ENCODE measurements at regions of chr1 and their contacts with region 1.

Region 1: DNA sequence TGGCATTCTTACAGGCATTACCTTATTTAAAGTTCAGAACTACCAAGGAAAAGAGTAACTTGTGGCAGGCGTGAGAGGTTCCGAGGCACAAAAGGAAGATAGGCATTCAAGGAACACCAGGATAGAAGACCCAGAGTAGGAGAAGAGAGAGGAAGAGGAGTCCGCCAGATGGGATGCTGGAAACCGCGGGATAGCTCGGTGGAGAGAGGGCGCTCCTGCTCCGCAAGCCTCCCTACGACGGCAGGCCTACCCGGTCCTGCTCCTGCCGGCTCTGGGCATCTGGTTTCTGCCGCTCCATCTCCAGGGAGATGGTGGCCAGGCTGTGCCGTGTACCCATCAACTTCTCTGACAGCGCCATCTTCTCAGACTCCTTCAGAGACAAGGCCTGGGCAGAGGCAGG is 5.4 kb upstream of the NBPF1 start:
- DNase-seq: peak in 3 of 4 experiments; percentile 47 to 67 (median 62)
- ATAC-seq: no peak
- H3K4me3 ChIP-seq: no peak overlapping the region
- H3K27ac ChIP-seq: no peak overlapping the region
- H3K4me1 ChIP-seq: peaks cover 19 to 39% of the 10 kb centered on the region in 2 experiments
- H3K27me3 ChIP-seq: no peaks in the 10 kb centered on the region
- CTCF ChIP-seq: peak in 1 of 3 experiments; percentile 11; a peak in 1 of 6 replicates
- EP300 ChIP-seq: no peak
- POLR2A ChIP-seq: no peak
- RAD21 ChIP-seq: no peak

Region 2: GRCh38 chr1:16631248-16632043 is 12.7 kb after region 1 on chr1:
- CTCF ChIA-PET with region 1: interaction called, 7 read pairs
- POLR2A ChIA-PET with region 1: interaction called, 36 read pairs
- in situ Hi-C with region 1: no loop called
- intact Hi-C with region 1: no loop called
- DNase-seq: peak in 3 of 4 experiments; percentile 34 to 50 (median 49)
- ATAC-seq: no peak; the same call in 2 of the 3 replicates
- H3K4me3 ChIP-seq: no peak overlapping the region
- H3K27ac ChIP-seq: no peak overlapping the region
- H3K4me1 ChIP-seq: peaks cover 0 to 22% of the 10 kb centered on the region in 2 experiments; a peak in 1 of 5 replicates
- H3K27me3 ChIP-seq: no peaks in the 10 kb centered on the region
- CTCF ChIP-seq: no peak
- EP300 ChIP-seq: no peak
- POLR2A ChIP-seq: peak; percentile 41
- RAD21 ChIP-seq: no peak

Region 3: DNA sequence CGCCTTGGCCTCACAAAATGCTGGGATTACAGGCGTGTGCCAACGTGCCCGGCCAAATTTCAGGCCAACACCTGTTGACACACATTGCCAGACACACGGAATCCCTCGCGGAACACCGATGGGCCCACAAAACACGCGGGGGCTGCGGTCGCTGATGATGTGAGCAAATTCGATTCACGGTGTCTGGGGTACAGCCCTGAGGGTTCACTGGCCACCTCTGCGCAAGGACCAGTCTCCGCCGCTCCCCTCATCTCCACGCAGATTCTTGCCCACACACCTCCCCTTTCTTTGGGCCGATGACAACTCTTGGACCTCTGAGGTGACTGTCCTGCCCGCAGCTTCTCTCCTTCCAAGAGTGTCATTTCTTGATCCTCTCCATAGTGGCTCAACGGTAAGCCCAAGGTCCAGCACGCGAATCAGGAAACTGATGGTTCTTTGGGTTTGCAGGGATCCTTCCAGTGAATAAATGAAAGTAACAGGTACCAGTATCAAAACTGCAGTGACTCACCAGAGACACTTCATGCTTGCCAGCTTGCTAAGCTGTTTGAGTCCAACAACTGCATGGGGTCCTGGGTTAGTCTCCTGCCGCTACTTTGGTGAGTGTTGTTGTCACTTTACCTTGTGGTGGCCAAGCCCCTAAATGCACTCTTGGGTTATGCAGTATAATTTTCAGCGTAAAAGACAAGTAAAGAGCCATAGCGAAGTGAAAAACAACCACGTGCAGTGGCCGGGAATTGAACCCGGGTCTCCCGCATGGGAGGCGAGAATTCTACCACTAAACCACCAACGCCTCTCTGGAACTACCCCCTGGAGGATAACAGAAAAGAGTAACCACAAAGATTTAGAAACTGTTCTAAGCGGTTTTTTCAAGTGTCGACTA is 59.1 kb after region 1 on chr1:
- CTCF ChIA-PET with region 1: no interaction called
- POLR2A ChIA-PET with region 1: no interaction called
- in situ Hi-C with region 1: no loop called
- intact Hi-C with region 1: no loop called
- DNase-seq: peak; percentile 69 to 92 (median 76)
- ATAC-seq: peak; percentile 98
- H3K4me3 ChIP-seq: peak overlapping the region; percentile 25
- H3K27ac ChIP-seq: peak overlapping the region; percentile 16; the same call in 2 of the 3 replicates
- H3K4me1 ChIP-seq: peaks cover 0 to 15% of the 10 kb centered on the region in 2 experiments; a peak in 3 of 5 replicates
- H3K27me3 ChIP-seq: no peaks in the 10 kb centered on the region
- CTCF ChIP-seq: peak in 2 of 3 experiments; percentile 1 to 12; a peak in 1 of 6 replicates
- EP300 ChIP-seq: peak; percentile 85
- POLR2A ChIP-seq: no peak
- RAD21 ChIP-seq: 0 out of 4 replicates have a peak, but pooled peaks of 1 of the 2 experiments have one; percentile 18

Region 4: DNA sequence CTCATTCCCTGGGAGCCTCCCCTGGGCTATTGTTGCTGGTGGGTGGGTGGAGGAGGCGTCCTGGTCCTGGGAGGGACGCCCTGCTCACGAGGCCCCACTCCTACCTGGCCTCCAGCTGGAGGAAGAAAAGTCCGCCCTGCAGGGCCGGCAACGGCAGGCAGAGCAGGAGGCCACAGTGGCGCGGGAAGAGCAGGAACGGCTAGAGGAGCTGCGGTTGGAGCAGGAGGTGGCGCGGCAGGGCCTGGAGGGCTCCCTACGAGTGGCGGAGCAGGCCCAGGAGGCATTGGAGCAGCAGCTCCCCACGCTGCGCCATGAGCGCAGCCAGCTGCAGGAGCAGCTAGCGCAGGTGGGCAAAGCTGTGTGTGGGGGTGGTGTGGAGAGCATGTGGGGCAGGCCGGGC is 327.9 kb after region 1 on chr1:
- CTCF ChIA-PET with region 1: interaction called, 18 read pairs
- POLR2A ChIA-PET with region 1: interaction called, 17 read pairs
- in situ Hi-C with region 1: no loop called
- intact Hi-C with region 1: loop called (anchors 1 kb)
- DNase-seq: no peak
- ATAC-seq: no peak
- H3K4me3 ChIP-seq: no peak overlapping the region
- H3K27ac ChIP-seq: no peak overlapping the region
- H3K4me1 ChIP-seq: peaks cover 0 to 17% of the 10 kb centered on the region in 2 experiments; a peak in 2 of 5 replicates
- H3K27me3 ChIP-seq: no peaks in the 10 kb centered on the region
- CTCF ChIP-seq: no peak
- EP300 ChIP-seq: no peak
- POLR2A ChIP-seq: no peak
- RAD21 ChIP-seq: no peak

Region 5: DNA sequence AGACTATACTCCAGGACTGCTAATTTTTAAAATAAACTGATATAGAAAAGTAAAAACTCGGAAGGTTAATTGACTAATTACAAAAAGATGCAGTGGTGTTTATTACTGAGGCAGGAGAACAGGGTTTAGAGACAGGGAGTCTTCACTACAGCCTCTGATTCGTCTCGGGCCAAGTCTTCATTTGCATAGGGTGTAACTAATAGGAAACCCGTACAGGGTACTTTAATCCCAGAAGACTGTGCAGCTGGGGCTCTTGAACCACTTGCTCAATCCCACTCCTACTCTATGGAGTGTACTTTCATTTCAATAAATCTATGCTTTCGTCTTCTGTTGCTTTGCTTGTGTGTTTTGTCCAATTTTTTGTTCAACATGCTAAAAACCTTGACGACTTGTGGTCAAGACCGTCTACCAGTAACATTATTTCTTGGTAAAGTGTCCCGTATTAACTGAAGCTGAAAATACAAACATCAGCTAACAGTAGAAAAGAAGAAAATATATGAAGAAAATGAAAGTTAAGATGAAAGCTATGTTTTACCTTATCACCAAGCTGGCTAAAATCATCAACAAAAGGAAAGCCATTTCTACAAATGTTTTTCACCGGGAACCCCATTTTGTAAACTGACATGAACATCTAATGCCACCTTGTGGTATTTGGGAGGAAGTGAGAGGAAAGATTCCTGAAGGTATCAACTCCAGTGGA is 427.1 kb after region 1 on chr1:
- CTCF ChIA-PET with region 1: interaction called, 34 read pairs
- POLR2A ChIA-PET with region 1: interaction called, 3 read pairs
- in situ Hi-C with region 1: no loop called
- intact Hi-C with region 1: loop called (anchors 1 kb)
- DNase-seq: peak in 2 of 4 experiments; percentile 58 to 60
- ATAC-seq: peak; percentile 80
- H3K4me3 ChIP-seq: no peak overlapping the region
- H3K27ac ChIP-seq: no peak overlapping the region
- H3K4me1 ChIP-seq: no peaks in the 10 kb centered on the region; a peak in 2 of 5 replicates
- H3K27me3 ChIP-seq: no peaks in the 10 kb centered on the region
- CTCF ChIP-seq: peak; percentile 57 to 91 (median 69); a peak in 5 of 6 replicates
- EP300 ChIP-seq: no peak
- POLR2A ChIP-seq: no peak
- RAD21 ChIP-seq: peak; percentile 84 to 88